ENCODE measurements at regions of chr10 and their contacts with region 1.

Region 1: GRCh38 chr10:69639291-69640195 is 9.5 kb downstream of the FAM241B start:
- DNase-seq: peak; percentile 69
- H3K4me3 ChIP-seq: no peak overlapping the region
- H3K27ac ChIP-seq: no peak overlapping the region
- H3K4me1 ChIP-seq: no peaks in the 10 kb centered on the region
- CTCF ChIP-seq: peak; percentile 94

Region 2: DNA sequence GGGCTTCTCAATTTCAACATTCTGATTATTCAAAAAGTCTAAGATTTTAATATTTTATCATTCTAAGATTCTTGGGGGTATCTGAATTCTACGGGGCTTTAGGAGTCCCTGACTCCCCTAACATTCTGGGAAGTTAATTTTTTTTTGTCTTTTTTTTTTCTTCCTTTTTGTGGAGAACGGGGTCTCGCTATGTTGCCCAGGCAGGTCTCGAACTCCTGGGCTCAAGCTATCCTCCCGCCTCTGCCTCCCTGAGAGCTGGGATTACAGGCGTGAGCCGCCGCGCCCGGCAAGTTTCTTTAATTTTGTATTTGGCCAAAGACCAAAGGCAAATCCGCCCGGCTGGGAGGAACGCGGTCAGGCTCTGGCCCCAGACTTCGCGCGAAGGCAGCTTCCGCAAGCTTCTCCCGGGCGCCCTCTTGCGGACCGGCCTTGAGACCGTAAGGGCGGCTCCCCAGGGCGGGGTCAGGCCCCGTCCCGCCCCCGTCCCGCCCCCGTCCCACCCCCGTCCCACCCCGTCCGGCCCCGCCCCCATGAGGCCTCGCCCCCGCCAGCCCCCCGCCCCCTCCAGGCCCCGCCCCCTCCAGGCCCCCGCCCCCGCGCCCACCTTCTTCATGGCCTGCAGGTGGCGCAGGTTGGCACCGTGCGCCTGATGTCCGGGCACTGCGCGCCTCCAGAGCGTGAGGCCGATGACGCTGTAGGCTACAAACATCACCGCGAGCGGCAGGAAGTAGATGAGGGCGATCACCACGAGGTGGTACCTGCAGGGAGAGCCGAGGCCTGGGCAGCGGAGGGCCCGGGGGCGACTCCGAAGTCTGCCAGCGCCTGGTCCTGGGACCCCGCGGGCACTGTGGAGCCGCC is 231.0 kb before region 1 on chr10:
- CTCF ChIA-PET with region 1: no interaction called
- POLR2A ChIA-PET with region 1: no interaction called
- intact Hi-C with region 1: loop called (anchors 5 kb)
- DNase-seq: peak; percentile 92
- H3K4me3 ChIP-seq: no peak overlapping the region
- H3K27ac ChIP-seq: no peak overlapping the region
- H3K4me1 ChIP-seq: peaks cover 28% of the 10 kb centered on the region
- CTCF ChIP-seq: peak; percentile 36

Region 3: DNA sequence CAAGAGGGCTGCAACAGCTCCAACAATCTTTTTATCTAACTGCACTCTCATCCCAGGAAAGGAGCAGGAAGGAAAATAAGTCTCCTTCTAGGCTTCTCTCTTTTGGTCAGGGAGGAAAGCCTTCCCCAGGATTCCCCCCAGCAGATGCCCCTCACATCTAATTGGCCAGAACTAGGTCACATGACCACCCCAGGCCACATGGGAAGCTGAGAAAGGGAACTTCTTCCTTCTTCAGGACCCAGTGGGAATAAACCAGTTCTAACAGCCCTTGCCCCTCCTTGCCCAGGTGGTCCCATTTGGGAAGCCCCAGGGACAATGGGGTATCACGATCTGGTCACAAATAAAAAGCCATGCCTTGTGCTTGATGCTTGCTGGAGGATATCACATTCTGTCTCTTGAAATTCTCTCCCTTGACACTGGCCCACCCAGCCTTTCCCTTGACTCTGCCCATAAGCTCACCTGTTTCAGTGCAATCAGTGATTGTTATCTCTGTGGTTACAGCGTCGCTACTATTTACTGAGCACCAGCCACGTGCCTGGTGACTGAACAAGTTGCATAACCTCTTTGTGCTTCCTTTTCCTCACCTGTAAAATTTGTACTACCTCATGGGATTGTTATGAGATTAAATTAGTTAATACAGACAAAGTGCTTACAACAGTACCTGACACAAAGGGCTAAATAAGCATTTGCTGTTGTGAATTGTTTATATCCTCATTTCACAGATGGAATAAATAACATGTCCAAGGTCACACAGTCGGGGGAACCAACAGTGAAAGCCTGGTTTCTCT is 213.8 kb before region 1 on chr10:
- CTCF ChIA-PET with region 1: no interaction called
- POLR2A ChIA-PET with region 1: no interaction called
- intact Hi-C with region 1: loop called (anchors 5 kb)
- DNase-seq: no peak
- H3K4me3 ChIP-seq: no peak overlapping the region
- H3K27ac ChIP-seq: no peak overlapping the region
- H3K4me1 ChIP-seq: peaks cover 7% of the 10 kb centered on the region
- CTCF ChIP-seq: no peak

Region 4: GRCh38 chr10:69515699-69516259 is 123.8 kb before region 1 on chr10:
- CTCF ChIA-PET with region 1: interaction called, 13 read pairs
- POLR2A ChIA-PET with region 1: no interaction called
- intact Hi-C with region 1: loop called (anchors 1 kb)
- DNase-seq: peak; percentile 70
- H3K4me3 ChIP-seq: no peak overlapping the region
- H3K27ac ChIP-seq: no peak overlapping the region
- H3K4me1 ChIP-seq: no peaks in the 10 kb centered on the region
- CTCF ChIP-seq: peak; percentile 87

Region 5: DNA sequence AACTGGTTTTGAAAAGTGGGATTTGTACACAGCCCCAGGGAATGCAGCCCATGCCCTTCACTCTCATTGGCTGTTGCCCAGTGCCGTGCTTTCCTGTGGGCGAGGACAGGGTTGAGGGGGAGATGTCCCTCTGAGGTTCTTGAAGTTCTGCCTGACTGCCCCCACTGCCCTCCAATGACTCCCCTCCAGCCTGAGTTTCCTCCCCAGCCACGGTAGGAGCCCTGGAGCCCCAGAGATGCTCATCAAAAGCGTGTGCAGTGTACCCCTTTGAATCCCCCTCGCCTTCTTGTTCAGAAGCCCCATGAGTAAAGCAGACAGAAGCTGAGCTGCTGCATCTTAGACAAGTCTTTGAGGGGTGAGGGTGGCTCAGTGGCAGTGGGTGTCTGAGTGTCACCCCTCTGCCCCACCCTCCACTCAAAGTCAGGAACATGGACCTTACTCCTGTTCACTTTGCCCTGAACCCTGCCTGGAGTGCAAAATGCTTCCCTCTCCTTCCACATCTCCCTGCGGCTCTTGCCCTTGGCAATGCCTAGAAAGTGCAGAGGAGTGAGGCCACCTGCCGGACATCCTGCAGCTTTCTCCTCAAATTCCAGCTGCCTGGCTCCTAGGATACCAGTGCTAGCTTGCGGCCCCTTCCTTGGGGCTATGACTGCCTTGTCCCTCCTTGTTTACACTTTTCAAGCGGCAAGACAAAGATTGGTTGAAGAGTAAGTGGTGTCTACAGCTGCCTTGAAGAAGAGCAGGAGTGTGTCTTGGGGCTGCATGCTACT is 10.4 kb after region 1 on chr10:
- CTCF ChIA-PET with region 1: no interaction called
- POLR2A ChIA-PET with region 1: no interaction called
- intact Hi-C with region 1: no loop called
- DNase-seq: no peak
- H3K4me3 ChIP-seq: no peak overlapping the region
- H3K27ac ChIP-seq: no peak overlapping the region
- H3K4me1 ChIP-seq: no peaks in the 10 kb centered on the region
- CTCF ChIP-seq: no peak

Region 6: DNA sequence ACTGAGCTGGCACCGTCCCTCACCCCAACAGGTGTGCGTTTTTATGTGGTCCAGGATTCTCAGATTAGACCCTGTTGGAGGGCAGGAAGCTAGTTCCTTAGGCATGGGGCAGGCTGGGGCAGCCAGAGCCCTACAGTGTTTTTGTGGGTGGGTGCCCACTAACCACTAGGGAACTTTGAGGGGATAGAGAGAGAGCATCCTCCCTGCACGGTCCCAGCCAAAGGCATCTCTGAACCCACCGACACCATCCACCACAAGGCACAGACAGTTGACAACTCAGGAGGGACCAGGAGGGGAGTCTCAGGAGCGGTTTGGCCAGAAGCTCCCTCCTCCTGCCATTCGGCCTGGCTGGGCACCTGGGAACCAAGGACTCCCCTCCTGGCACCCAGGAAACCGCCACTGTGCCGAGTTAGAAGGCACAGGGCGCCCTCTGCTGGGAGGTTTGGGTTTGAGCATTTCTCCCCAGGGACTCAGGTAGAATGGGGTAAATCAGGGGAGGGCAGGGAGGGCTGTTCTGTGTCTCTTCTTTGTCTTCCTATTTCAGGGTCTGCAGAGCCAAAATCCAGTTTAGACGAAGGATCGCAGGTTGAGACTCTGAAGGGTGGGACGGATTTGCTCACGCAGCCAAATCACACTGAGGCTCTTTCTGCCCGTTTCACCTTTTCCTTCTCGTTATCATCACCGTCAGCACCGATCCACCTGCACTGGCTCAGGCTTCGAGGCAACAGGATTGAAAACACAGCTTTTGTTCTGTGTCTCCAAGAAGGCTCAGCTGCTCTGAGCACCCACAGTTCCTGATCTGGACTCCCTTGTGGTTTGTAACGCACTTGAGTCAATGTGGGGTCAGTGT is 77.4 kb after region 1 on chr10:
- CTCF ChIA-PET with region 1: no interaction called
- POLR2A ChIA-PET with region 1: no interaction called
- intact Hi-C with region 1: loop called (anchors 5 kb)
- DNase-seq: peak; percentile 59
- H3K4me3 ChIP-seq: no peak overlapping the region
- H3K27ac ChIP-seq: no peak overlapping the region
- H3K4me1 ChIP-seq: no peaks in the 10 kb centered on the region
- CTCF ChIP-seq: peak; percentile 83

Region 7: DNA sequence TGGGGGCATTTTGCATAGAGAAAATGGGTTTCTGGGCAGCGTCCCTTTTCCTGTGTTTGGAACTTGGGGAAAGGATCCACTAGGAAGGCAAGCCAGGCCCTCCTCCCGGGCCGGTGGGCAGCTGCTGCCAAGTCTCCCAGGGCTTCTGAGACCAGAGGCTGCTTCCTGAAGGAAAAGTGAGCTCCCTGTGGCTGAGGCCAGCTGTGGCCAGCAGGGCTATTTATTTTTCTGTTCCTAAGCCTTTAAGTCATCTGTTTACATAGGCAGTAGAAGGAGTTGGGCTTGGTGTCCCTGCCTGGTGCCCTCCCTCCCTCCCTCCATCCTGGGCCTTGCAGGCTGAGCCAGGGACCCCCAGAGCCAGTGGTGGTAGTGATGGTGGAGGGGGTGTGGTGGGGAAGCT is 91.6 kb after region 1 on chr10:
- CTCF ChIA-PET with region 1: no interaction called
- POLR2A ChIA-PET with region 1: no interaction called
- intact Hi-C with region 1: no loop called
- DNase-seq: no peak
- H3K4me3 ChIP-seq: no peak overlapping the region
- H3K27ac ChIP-seq: no peak overlapping the region
- H3K4me1 ChIP-seq: peaks cover 8% of the 10 kb centered on the region
- CTCF ChIP-seq: no peak

Region 8: DNA sequence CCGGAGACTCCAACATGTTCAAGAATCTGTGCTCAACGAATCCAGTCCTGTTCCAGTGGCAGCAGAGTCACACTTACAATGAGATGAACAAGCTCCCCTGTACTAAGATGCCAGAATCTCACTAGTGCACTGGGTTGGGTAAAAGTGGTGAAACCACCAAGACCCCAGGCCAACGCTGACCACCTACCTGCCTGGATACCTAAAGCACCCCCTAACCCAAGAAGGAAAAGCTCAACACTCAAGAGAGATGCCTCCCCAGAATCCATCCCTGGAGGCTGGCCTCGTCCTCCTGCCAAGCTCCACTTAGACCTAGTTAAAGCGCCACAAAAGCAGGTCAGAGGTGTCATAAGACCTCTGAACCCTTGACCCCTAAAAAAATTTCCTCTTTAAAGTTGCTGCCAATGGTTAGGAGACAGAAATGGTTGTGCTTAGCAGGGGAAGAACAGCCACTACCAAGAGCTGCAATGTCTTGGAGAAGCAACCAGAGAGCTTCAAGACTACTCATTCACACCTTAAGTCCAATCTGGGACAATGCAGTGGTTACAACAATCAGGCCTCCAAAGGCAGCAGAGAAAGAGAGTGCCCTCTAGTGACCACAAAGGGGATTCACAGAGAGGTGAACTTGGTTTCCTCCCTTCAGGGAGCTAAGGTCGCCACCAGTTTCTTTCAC is 318.5 kb after region 1 on chr10:
- CTCF ChIA-PET with region 1: no interaction called
- POLR2A ChIA-PET with region 1: no interaction called
- intact Hi-C with region 1: loop called (anchors 10 kb)
- DNase-seq: peak; percentile 78
- H3K4me3 ChIP-seq: no peak overlapping the region
- H3K27ac ChIP-seq: no peak overlapping the region
- H3K4me1 ChIP-seq: peaks cover 44% of the 10 kb centered on the region
- CTCF ChIP-seq: peak; percentile 92